ENCODE measurements at regions of chr10 and their contacts with region 1.

Region 1: DNA sequence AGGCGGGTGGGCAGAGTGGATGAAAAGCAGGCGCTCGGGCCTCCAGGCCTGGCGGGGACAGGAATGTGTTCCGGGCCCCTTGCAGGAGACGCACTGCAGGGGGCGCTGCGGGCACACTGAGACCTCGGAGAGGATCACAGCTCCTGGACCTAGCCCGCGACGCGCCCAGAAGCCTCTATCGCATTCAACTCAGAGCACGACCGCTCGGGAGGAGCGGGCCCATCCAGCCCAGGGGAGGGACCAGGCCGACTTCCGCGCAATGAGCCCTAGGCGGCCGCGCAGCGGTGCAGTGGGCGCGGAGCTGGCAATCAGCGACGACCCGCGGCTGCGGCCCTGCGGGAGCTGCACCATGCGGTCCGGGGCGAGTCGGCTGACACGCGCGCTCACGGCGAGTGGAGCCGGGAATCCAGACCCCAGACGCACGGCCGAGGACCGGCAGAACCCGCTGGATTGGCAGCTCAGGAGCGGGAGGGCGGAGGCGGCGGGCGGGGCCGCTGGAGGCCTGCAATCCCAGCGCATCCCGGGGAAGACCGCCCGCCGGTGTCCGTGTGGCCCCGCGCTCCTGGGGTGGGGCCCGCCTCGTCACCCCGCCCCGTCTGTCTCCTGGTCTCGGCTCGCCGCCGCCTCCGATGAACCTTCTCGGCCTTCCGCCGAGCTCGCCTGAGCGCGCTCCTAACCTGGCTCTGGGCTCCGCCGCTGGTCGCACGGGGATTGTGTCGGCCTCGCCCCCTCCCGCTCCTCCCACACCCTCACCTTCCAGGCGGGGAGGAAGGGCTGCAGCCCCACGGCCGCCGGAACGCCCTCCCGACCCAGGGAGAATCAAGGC is 33.5 kb upstream of the GRID1 start:
- DNase-seq: peak; percentile 94
- ATAC-seq: peak; percentile 95
- H3K4me3 ChIP-seq: peak overlapping the region; percentile 65
- H3K27ac ChIP-seq: peak overlapping the region; percentile 65
- H3K4me1 ChIP-seq: peaks cover 10% of the 10 kb centered on the region
- H3K27me3 ChIP-seq: peaks cover 4% of the 10 kb centered on the region; the same call in 1 of the 2 replicates
- CTCF ChIP-seq: peak; percentile 95
- POLR2A ChIP-seq: peak; percentile 26; the same call in 1 of the 2 replicates
- RAD21 ChIP-seq: peak; percentile 94

Region 2: GRCh38 chr10:86439544-86439943 is 39.5 kb after region 1 on chr10:
- CTCF ChIA-PET with region 1: interaction called, 8 read pairs
- POLR2A ChIA-PET with region 1: no interaction called
- dilution Hi-C with region 1: no loop called
- in situ Hi-C with region 1: no loop called
- intact Hi-C with region 1: loop called (anchors 2 kb)
- DNase-seq: peak; percentile 97
- ATAC-seq: peak; percentile 75
- H3K4me3 ChIP-seq: no peak overlapping the region
- H3K27ac ChIP-seq: no peak overlapping the region
- H3K4me1 ChIP-seq: peaks cover 8% of the 10 kb centered on the region
- H3K27me3 ChIP-seq: no peaks in the 10 kb centered on the region
- CTCF ChIP-seq: no peak
- POLR2A ChIP-seq: no peak
- RAD21 ChIP-seq: no peak

Region 3: DNA sequence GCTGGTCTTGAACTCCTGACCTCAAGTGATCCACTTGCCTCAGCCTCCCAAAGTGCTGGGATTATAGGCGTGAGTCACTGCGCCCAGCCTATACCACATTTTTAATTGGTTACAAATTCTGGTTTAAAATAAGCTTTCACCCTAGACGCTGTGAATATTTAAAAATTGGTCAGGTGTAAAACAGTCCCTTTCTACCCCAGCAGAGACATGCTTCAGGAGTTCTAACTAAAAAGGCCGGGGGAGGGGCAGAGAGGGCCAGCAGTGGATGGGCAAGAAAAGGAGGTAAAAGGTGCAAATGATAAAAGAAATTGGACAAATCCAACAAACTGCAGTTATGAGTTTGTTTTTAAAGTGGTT is 51.5 kb after region 1 on chr10:
- CTCF ChIA-PET with region 1: no interaction called
- POLR2A ChIA-PET with region 1: no interaction called
- dilution Hi-C with region 1: no loop called
- in situ Hi-C with region 1: no loop called
- intact Hi-C with region 1: no loop called
- DNase-seq: no peak
- ATAC-seq: no peak
- H3K4me3 ChIP-seq: no peak overlapping the region
- H3K27ac ChIP-seq: no peak overlapping the region
- H3K4me1 ChIP-seq: peaks cover 5% of the 10 kb centered on the region
- H3K27me3 ChIP-seq: no peaks in the 10 kb centered on the region
- CTCF ChIP-seq: no peak
- POLR2A ChIP-seq: no peak
- RAD21 ChIP-seq: no peak

Region 4: GRCh38 chr10:86521678-86522509 is 121.8 kb after region 1 on chr10 and contains the start of gene WAPL:
- CTCF ChIA-PET with region 1: no interaction called
- POLR2A ChIA-PET with region 1: no interaction called
- dilution Hi-C with region 1: no loop called
- in situ Hi-C with region 1: no loop called
- intact Hi-C with region 1: loop called (anchors 1 kb)
- DNase-seq: peak; percentile 90
- ATAC-seq: peak; percentile 98
- H3K4me3 ChIP-seq: peak within 1 kb of the TSS; percentile 68
- H3K27ac ChIP-seq: peak within 1 kb of the TSS; percentile 81
- H3K4me1 ChIP-seq: no peaks in the 10 kb centered on the region; the same call in 1 of the 2 replicates
- H3K27me3 ChIP-seq: no peaks in the 10 kb centered on the region
- CTCF ChIP-seq: no peak
- POLR2A ChIP-seq: no peak
- RAD21 ChIP-seq: no peak
- total RNA-seq, gene WAPL: 31.7 and 49.4 TPM in 2 replicates